Kidney (tissue), 22 donors: ENCODE measurements at regions of chr1 and their contacts with region 1.

Region 1: GRCh38 chr1:244796718-244797406 is 38.6 kb upstream of the COX20 start:
- DNase-seq: peak in 4 of 5 donors; percentile 58 to 82 (median 66)
- H3K4me3 ChIP-seq: no peak overlapping the region
- H3K27ac ChIP-seq: no peak overlapping the region
- H3K4me1 ChIP-seq: peaks cover 0 to 2% (median 0%) of the 10 kb centered on the region in 3 donors
- H3K27me3 ChIP-seq: no peaks in the 10 kb centered on the region
- CTCF ChIP-seq: peak; percentile 92

Region 2: GRCh38 chr1:244605835-244606370 is 191.0 kb before region 1 on chr1:
- intact Hi-C with region 1: loop called (anchors 5 kb)
- DNase-seq: peak in 2 of 5 donors; percentile 6 to 11
- H3K4me3 ChIP-seq: no peak overlapping the region
- H3K27ac ChIP-seq: no peak overlapping the region
- H3K4me1 ChIP-seq: no peaks in the 10 kb centered on the region
- H3K27me3 ChIP-seq: no peaks in the 10 kb centered on the region
- CTCF ChIP-seq: no peak

Region 3: GRCh38 chr1:245031041-245031440 is 234.2 kb after region 1 on chr1:
- intact Hi-C with region 1: loop called (anchors 10 kb)
- DNase-seq: no peak
- H3K4me3 ChIP-seq: no peak overlapping the region
- H3K27ac ChIP-seq: no peak overlapping the region
- H3K4me1 ChIP-seq: no peaks in the 10 kb centered on the region
- H3K27me3 ChIP-seq: no peaks in the 10 kb centered on the region
- CTCF ChIP-seq: no peak